ENCODE measurements at regions of chr6 and their contacts with region 1.

Region 1: DNA sequence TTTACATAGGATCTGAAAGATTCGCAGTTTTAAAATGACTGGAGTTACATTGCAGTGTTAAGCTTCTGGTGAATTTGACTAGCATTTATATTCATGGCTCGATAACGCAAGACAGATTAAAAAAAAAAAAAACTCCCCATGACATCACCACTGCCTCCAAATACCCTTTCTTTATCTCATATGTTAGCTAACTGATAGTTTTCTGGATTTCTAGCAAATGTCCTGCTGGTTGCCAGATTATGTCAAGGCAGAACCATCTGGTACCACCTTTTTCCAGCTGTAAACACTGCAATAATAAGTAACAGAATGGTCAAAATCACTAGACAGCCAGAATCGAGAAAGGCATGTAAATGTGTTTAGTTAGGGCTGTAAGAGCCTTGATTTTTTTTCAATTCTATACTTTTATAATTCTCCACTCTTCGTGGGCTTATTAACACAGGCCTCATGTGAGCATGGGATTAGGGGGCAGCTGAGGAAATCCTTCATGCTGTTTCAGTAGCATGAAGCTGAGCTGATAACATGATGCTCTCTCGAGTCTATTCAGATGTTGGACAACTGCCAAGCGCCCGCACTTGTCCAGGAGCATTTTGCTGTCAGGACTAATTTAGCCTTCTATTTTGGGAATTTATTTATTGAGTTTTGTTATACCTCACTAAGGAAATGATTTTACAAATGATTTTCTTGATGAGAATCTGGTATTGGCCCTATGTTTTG is 166.0 kb upstream of the SCGN start:
- DNase-seq: no peak
- CTCF ChIP-seq: no peak

Region 2: GRCh38 chr6:25278914-25279747 is 206.8 kb before region 1 on chr6 and contains the start of gene CARMIL1:
- in situ Hi-C with region 1: loop called (anchors 10 kb)
- DNase-seq: peak; percentile 90
- CTCF ChIP-seq: peak; percentile 71

Region 3: DNA sequence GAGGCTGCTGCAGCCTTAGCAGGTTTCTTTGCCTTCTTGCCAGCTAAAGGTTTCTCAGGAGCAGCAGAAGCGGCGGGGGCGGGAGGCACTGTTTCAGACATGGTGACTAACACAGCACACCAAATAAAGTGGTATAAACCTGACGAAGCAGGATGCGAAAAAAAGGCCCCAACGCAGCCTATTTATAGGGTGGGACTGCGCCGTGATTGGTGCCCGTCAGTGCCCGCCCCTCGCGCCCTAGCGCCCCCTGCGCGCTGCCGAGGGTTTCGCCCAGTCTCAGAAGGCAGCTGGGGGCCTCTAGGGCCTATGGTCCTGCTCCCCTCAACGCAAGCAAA is 531.6 kb after region 1 on chr6:
- in situ Hi-C with region 1: no loop called
- DNase-seq: peak; percentile 44
- CTCF ChIP-seq: peak; percentile 39

Measured in GM13977 (cell line).